ENCODE measurements at regions of chr15 and their contacts with region 1.

Region 1: GRCh38 chr15:79028411-79028964 is 62.1 kb downstream of the RASGRF1 start:
- DNase-seq: no peak
- H3K4me3 ChIP-seq: no peak overlapping the region
- H3K27me3 ChIP-seq: no peaks in the 10 kb centered on the region
- CTCF ChIP-seq: peak; percentile 82

Region 2: DNA sequence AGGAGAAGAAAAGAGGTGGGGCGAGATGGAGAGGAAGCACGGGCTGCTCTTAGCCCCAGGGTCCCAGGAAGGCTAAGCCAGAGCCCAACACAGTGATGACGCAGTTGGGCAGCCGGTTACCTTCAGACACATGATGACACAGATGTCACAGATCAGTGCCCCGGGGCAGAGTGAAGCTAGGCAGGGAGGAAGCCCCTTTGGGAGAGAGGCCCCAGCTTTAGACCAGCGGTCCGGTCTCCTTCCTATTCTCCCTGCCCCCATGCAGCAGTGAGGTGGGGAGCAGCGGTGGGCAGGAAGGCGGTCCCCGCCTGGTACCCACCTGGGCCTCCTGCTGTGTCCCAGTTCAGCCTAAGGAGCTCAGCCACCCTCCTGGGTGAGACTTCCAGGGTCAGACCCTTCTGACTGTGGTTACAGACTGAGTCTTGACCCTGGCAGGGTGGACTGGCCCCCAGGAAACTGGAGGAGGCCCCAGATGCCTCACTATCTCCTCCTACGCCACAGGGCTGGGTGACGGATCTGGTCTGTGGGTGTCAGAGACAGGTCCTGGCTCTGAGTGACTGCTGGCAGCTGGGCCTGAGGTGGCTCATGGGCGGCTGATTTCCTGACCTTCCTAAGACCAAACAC is 1357.0 kb before region 1 on chr15:
- CTCF ChIA-PET with region 1: no interaction called
- POLR2A ChIA-PET with region 1: no interaction called
- DNase-seq: no peak
- H3K4me3 ChIP-seq: no peak overlapping the region
- H3K27me3 ChIP-seq: peaks cover 43% of the 10 kb centered on the region
- CTCF ChIP-seq: no peak

Region 3: GRCh38 chr15:79041601-79042168 is 13.2 kb after region 1 on chr15:
- CTCF ChIA-PET with region 1: interaction called, 14 read pairs
- POLR2A ChIA-PET with region 1: no interaction called
- DNase-seq: no peak
- H3K4me3 ChIP-seq: no peak overlapping the region
- H3K27me3 ChIP-seq: peaks cover under 1% of the 10 kb centered on the region; the same call in 1 of the 2 replicates
- CTCF ChIP-seq: no peak

Region 4: DNA sequence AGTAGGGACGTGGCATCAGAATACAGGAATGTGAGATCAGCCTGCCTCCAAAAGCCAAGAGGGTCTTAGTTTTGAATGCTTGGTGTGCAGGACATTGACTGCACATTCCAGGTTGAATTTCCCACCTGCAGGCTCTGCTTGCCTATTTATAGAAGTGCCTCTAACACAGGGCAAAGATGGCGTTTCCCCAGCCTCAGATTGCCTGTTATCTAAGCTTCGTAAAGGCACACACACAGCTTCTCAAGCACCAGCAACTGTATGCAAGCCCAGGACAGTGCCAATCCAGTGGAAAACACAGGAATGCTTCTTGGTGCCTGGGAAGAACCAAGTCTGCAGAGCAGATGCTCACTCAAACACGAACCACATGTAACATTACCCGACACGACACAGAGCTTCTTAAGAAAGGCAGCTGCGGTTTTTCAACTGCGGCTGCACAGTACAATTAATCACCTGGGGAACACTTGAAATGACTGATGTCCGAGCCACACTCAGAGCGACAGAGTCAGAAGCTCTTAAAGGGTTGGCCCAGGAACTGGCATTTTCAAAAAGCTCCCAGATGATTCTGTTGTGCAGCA is 164.1 kb after region 1 on chr15:
- CTCF ChIA-PET with region 1: interaction called, 16 read pairs
- POLR2A ChIA-PET with region 1: no interaction called
- DNase-seq: peak; percentile 24
- H3K4me3 ChIP-seq: no peak overlapping the region
- H3K27me3 ChIP-seq: peaks cover 5% of the 10 kb centered on the region
- CTCF ChIP-seq: no peak